Spleen (tissue), 13 donors: ENCODE measurements at regions of chr12 and their contacts with region 1.

Region 1: DNA sequence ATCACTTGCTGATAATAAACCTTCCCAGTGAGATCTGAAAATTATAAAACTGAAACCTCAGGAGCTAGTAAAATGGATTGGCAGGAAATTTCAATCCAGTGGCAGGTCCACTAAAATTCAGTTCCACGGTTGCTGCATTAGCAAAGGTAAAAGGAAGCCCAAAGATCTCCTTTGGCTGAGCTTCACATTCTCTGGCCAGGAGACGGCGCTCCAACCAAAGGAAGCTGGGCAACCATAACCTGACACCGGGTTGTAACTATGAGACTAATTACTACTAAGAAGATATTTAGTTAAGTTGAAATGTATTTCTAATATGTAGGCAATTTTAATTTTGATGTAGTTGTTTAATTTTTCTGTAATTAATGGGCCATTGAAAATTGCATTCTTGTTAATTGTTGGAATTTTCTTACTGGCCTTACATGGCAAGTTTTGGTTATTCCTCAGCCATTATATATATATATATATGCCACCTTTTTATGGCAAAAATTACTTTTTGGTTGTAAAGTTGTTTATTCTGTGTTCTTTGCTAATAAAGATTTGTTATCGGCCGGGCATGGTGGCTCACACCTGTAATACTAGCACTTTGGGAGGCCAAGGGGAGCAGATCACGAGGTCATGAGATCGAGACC is 17.0 kb downstream of the OR8S1 start:
- DNase-seq: no peak
- H3K4me3 ChIP-seq: no peak overlapping the region
- H3K27ac ChIP-seq: no peak overlapping the region
- H3K4me1 ChIP-seq: no peaks in the 10 kb centered on the region
- H3K27me3 ChIP-seq: peaks cover 0 to 3% (median 0%) of the 10 kb centered on the region in 7 donors
- CTCF ChIP-seq: peak in 8 of 11 experiments; percentile 32 to 66 (median 51)
- POLR2A ChIP-seq: no peak

Region 2: GRCh38 chr12:48388430-48388829 is 154.0 kb before region 1 on chr12:
- intact Hi-C with region 1: no loop called
- DNase-seq: no peak
- H3K4me3 ChIP-seq: no peak overlapping the region
- H3K27ac ChIP-seq: no peak overlapping the region
- H3K4me1 ChIP-seq: no peaks in the 10 kb centered on the region
- H3K27me3 ChIP-seq: no peaks in the 10 kb centered on the region
- CTCF ChIP-seq: no peak
- POLR2A ChIP-seq: no peak

Region 3: GRCh38 chr12:48618541-48618940 is 76.1 kb after region 1 on chr12:
- intact Hi-C with region 1: loop called (anchors 2 kb)
- DNase-seq: peak; percentile 82
- H3K4me3 ChIP-seq: no peak overlapping the region
- H3K27ac ChIP-seq: no peak overlapping the region
- H3K4me1 ChIP-seq: no peaks in the 10 kb centered on the region
- H3K27me3 ChIP-seq: peaks cover 0 to 35% (median 0%) of the 10 kb centered on the region in 7 donors
- CTCF ChIP-seq: peak; percentile 75 to 94 (median 87)
- POLR2A ChIP-seq: no peak

Region 4: GRCh38 chr12:48631057-48631456 is 88.6 kb after region 1 on chr12:
- intact Hi-C with region 1: no loop called
- DNase-seq: no peak
- H3K4me3 ChIP-seq: no peak overlapping the region
- H3K27ac ChIP-seq: no peak overlapping the region
- H3K4me1 ChIP-seq: no peaks in the 10 kb centered on the region
- H3K27me3 ChIP-seq: peaks cover 0 to 22% (median 0%) of the 10 kb centered on the region in 7 donors
- CTCF ChIP-seq: no peak
- POLR2A ChIP-seq: no peak

Region 5: GRCh38 chr12:48795480-48796455 is 253.4 kb after region 1 on chr12:
- intact Hi-C with region 1: loop called (anchors 5 kb)
- DNase-seq: no peak
- H3K4me3 ChIP-seq: no peak overlapping the region
- H3K27ac ChIP-seq: no peak overlapping the region
- H3K4me1 ChIP-seq: peaks cover 0 to 10% (median 7%) of the 10 kb centered on the region in 6 donors
- H3K27me3 ChIP-seq: peaks cover 0 to 21% (median 0%) of the 10 kb centered on the region in 7 donors
- CTCF ChIP-seq: peak; percentile 84 to 98 (median 94)
- POLR2A ChIP-seq: peak in 1 of 3 donors; percentile 1